Right ventricle myocardium inferior (tissue), 1 donor: ENCODE measurements at regions of chr20 and their contacts with region 1.

Region 1: GRCh38 chr20:41095110-41095969 is 42.0 kb upstream of the PLCG1 start:
- DNase-seq: peak; percentile 76
- ATAC-seq: peak; percentile 56

Region 2: DNA sequence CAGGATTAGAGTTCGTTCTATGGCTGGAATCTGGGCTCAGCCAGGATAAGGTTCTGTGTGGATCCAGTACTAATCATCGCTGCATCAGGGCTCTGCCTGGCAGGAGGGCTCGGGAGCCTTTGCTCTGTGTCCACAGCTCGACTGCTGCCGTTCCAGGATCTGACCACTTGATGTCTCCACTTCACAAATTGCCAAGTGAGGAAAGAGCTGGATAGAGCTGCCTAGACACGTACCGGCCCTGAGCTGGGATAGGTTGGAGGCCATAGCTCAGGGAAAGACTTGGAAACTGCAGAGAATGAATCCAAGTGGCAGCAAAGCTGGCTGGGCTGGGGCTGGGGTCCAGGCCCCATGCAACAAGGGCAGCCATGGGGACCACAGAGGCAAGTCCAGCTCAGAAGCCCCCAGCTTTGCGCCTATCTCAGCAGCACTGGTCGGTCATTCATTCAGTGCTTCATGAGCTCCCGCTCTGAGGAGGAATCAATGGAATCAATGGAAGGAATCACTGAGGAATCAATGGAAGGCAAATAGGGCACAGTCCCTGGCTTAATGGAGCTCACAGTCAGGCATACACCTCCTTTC is 104.7 kb before region 1 on chr20:
- intact Hi-C with region 1: loop called (anchors 1 kb)
- DNase-seq: peak; percentile 76
- ATAC-seq: peak; percentile 98

Region 3: DNA sequence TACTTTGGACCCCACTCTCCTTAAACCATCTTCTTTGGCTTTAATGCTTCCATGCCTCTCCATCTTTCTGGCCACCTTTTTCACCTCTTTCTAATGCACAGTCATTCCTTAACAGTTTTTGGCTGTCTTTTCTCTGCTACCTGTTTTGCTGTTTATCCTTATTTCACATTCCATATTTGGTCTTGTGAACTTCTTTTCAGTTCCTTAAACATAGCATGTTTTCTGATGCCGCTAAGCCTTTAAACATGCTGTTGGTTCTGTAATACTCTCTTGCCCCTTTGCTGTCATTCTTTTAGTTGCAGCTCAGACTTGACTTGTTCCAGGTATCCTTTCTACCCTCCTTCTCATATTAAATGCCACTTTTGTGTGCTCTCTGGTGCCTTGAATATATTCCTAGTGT is 31.0 kb before region 1 on chr20:
- intact Hi-C with region 1: no loop called
- DNase-seq: no peak
- ATAC-seq: no peak